CD4-positive, alpha-beta memory T cell (primary cell): ENCODE measurements at regions of chr17 and their contacts with region 1.

Region 1: GRCh38 chr17:3845621-3846441 is at the start of gene NCBP3:
- DNase-seq: peak; percentile 85 to 93 (median 90)
- H3K4me3 ChIP-seq: peak within 1 kb of the TSS; percentile 38 to 85
- H3K4me3 Mint-ChIP-seq: peak within 1 kb of the TSS; percentile 91 to 96 (median 94)
- H3K27ac ChIP-seq: peak within 1 kb of the TSS; percentile 84
- H3K27ac Mint-ChIP-seq: peak within 1 kb of the TSS; percentile 87 to 94 (median 89)
- H3K4me1 ChIP-seq: peaks cover 30% of the 10 kb centered on the region
- H3K4me1 Mint-ChIP-seq: peaks cover 12 to 35% (median 24%) of the 10 kb centered on the region in 4 donors
- H3K27me3 ChIP-seq: no peaks in the 10 kb centered on the region
- H3K27me3 Mint-ChIP-seq: no peaks in the 10 kb centered on the region
- total RNA-seq, gene NCBP3: 48.5 to 66.7 TPM

Region 2: GRCh38 chr17:3668279-3669085 is 177.3 kb before region 1 on chr17 and contains the starts of genes EMC6 and TAX1BP3:
- CTCF ChIA-PET with region 1: no interaction called
- POLR2A ChIA-PET with region 1: interaction called, 4 read pairs
- intact Hi-C with region 1: loop called (anchors 1 kb)
- DNase-seq: peak; percentile 97 to 100 (median 99)
- H3K4me3 ChIP-seq: peak within 1 kb of the TSS; percentile 76 to 83
- H3K4me3 Mint-ChIP-seq: peak within 1 kb of the TSS; percentile 88 to 96 (median 92)
- H3K27ac ChIP-seq: peak within 1 kb of the TSS; percentile 80
- H3K27ac Mint-ChIP-seq: peak within 1 kb of the TSS; percentile 84 to 95 (median 90)
- H3K4me1 ChIP-seq: peaks cover 23% of the 10 kb centered on the region
- H3K4me1 Mint-ChIP-seq: peaks cover 18 to 30% (median 19%) of the 10 kb centered on the region in 4 donors
- H3K27me3 ChIP-seq: no peaks in the 10 kb centered on the region
- H3K27me3 Mint-ChIP-seq: no peaks in the 10 kb centered on the region
- total RNA-seq, gene EMC6: 27.8 to 29.4 TPM
- total RNA-seq, gene TAX1BP3: 12.7 to 13.2 TPM

Region 3: GRCh38 chr17:3827124-3827773 is 18.6 kb before region 1 on chr17:
- CTCF ChIA-PET with region 1: interaction called, 30 read pairs
- POLR2A ChIA-PET with region 1: interaction called, 3 read pairs
- intact Hi-C with region 1: no loop called
- DNase-seq: peak; percentile 67 to 79 (median 74)
- H3K4me3 ChIP-seq: no peak overlapping the region
- H3K4me3 Mint-ChIP-seq: no peak overlapping the region
- H3K27ac ChIP-seq: no peak overlapping the region
- H3K27ac Mint-ChIP-seq: peak overlapping the region in 3 of 7 donors; percentile 42 to 74 (median 70)
- H3K4me1 ChIP-seq: no peaks in the 10 kb centered on the region
- H3K4me1 Mint-ChIP-seq: peaks cover 1 to 5% (median 4%) of the 10 kb centered on the region in 4 donors
- H3K27me3 ChIP-seq: no peaks in the 10 kb centered on the region
- H3K27me3 Mint-ChIP-seq: no peaks in the 10 kb centered on the region

Region 4: DNA sequence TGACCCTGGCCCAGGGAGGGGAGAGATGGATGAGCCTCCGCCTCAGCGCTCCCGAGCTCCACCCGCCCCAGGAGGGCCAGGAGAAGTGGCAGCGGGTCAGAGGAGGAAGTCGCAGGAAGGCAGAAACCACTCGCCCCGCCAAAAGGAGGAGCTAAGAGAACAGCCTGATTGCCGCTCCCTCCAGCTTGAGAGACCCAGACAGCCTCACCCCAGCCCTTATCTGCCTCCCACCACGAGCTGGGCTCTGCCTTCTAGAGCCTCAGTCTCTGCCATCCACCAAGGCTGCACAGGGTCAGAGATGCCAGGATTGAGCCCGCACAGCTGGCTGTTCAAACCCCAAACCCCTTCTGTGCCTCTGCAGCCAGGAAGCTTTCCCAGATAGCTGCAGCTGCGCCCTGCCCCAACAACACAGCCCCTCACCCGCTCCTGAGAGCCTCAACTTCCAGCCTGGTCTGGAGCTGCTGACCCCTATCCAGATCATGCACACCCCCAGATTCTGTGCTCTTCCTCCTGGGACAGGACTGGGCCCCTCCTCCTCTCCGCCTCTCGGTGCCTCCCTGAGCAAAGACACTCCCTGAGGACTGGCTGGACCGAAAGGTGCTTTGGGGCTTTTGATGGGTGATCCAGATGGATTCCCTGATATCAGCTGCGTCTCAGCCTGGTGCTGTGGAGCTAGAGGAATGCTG is 119.4 kb after region 1 on chr17:
- CTCF ChIA-PET with region 1: interaction called, 5 read pairs
- POLR2A ChIA-PET with region 1: interaction called, 6 read pairs
- intact Hi-C with region 1: loop called (anchors 2 kb)
- DNase-seq: peak; percentile 58 to 82 (median 65)
- H3K4me3 ChIP-seq: peak overlapping the region; percentile 76 to 80
- H3K4me3 Mint-ChIP-seq: peak overlapping the region; percentile 90 to 94 (median 93)
- H3K27ac ChIP-seq: peak overlapping the region; percentile 77
- H3K27ac Mint-ChIP-seq: peak overlapping the region; percentile 87 to 98 (median 96)
- H3K4me1 ChIP-seq: peaks cover 37% of the 10 kb centered on the region
- H3K4me1 Mint-ChIP-seq: peaks cover 26 to 43% (median 35%) of the 10 kb centered on the region in 4 donors
- H3K27me3 ChIP-seq: no peaks in the 10 kb centered on the region
- H3K27me3 Mint-ChIP-seq: no peaks in the 10 kb centered on the region

Region 5: DNA sequence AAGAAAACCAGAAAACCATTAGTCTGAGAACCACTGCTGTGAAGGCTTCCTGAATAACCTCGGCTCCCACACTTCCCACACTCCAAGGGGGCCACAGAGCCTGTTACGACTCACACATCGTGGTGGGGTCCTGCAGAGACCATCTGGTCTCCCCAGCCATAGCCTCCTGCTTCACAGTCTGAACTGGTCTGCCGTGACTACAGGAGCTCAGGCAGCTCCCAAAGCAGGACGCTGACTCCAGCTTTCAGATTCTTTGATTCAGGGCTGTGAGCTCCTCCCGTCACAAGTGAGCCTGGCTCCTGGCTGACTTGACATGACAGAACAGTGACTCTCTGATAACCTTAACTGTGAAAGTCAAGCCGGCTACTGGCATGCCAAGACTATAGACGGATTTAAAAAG is 335.0 kb after region 1 on chr17:
- CTCF ChIA-PET with region 1: no interaction called
- POLR2A ChIA-PET with region 1: no interaction called
- intact Hi-C with region 1: no loop called
- DNase-seq: no peak
- H3K4me3 ChIP-seq: no peak overlapping the region
- H3K4me3 Mint-ChIP-seq: no peak overlapping the region
- H3K27ac ChIP-seq: no peak overlapping the region
- H3K27ac Mint-ChIP-seq: peak overlapping the region in 1 of 7 donors; percentile 18
- H3K4me1 ChIP-seq: peaks cover 27% of the 10 kb centered on the region
- H3K4me1 Mint-ChIP-seq: peaks cover 23 to 34% (median 25%) of the 10 kb centered on the region in 4 donors
- H3K27me3 ChIP-seq: no peaks in the 10 kb centered on the region
- H3K27me3 Mint-ChIP-seq: no peaks in the 10 kb centered on the region

Region 6: DNA sequence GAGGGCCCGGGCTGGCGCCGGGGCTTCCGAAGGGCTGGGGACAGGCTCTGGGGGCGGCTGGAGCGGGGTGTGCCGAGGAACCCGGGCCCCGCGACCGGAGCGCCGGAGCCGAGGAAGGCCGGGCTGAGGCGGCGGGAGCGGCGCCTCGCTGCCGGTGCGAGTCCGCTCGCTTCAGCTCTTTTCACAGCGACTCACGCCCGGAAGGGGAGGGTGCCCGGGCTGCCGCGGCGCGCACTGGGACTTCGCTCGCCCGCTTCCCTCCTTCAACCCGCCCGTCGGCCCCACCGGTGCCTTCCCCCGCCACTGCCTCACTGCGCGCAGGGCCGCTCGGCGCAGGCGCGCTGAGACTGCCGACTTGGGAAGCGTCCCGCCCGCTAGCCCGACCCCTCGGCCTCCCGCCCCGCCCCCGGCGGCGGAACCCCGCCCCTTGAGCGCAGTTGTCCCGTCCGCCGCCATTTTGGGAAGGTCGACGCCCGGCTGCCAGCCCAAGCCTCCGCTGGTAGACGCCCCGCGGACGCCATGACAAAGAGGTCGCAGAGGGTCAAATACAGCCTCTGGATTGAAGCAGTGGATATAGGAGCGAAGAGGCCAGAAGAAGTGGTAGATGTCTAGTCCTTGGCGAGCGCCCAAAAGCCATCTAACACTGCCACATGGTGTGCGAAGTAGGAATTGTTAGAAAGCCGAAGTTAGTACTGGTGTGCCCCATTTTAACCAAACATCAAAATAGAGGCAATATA is 520.7 kb after region 1 on chr17 and contains the start of gene UBE2G1:
- CTCF ChIA-PET with region 1: no interaction called
- POLR2A ChIA-PET with region 1: no interaction called
- intact Hi-C with region 1: loop called (anchors 10 kb)
- DNase-seq: peak; percentile 97 to 99 (median 98)
- H3K4me3 ChIP-seq: peak within 1 kb of the TSS; percentile 39 to 54
- H3K4me3 Mint-ChIP-seq: peak within 1 kb of the TSS; percentile 85 to 93 (median 90)
- H3K27ac ChIP-seq: peak within 1 kb of the TSS; percentile 85
- H3K27ac Mint-ChIP-seq: peak within 1 kb of the TSS; percentile 82 to 99 (median 99)
- H3K4me1 ChIP-seq: peaks cover 34% of the 10 kb centered on the region
- H3K4me1 Mint-ChIP-seq: peaks cover 20 to 41% (median 29%) of the 10 kb centered on the region in 4 donors
- H3K27me3 ChIP-seq: no peaks in the 10 kb centered on the region
- H3K27me3 Mint-ChIP-seq: no peaks in the 10 kb centered on the region
- total RNA-seq, gene UBE2G1: 56.9 to 61.6 TPM